GM12878 (cell line): ENCODE measurements at regions of chr3 and their contacts with region 1.

Region 1: DNA sequence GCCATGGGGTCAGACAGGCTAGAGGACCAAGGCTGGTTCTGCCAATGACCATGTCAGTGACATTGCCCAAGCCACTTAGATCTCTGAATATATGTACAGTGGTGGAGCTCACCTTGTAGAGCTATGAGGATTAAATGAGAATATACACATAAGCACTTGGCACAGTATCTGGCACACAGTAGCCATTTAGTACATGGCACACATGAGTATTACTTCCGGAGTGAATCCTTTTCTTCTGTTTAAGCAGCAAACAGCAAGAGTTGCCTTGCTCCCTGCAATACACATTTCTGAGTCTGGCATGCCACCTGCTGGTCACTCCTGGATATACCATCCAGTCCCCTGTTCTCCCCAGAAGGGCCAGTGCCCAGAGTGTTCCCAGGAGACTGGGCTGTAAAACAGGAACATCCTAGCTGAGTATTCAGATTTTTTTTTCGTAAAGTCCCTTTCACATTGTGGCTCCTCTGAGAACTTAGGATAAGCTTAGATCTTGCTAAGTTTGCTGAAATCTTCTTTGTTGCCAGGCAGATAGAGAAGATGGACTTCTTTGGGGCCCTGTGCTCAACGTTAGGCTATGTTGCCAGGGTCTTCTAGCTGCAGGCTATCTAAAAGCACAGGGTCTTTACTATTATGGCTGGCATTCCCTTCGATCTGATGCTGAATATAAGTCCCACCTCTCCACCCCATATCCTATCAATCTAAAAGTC is 203.4 kb downstream of the ADAMTS9 start:
- DNase-seq: peak; percentile 45
- ATAC-seq: peak; percentile 99
- H3K4me3 ChIP-seq: no peak overlapping the region
- H3K27ac ChIP-seq: no peak overlapping the region
- H3K4me1 ChIP-seq: no peaks in the 10 kb centered on the region
- H3K27me3 ChIP-seq: peaks cover under 1 to 5% of the 10 kb centered on the region in 2 experiments; a peak in 1 of 4 replicates
- CTCF ChIP-seq: peak; percentile 76 to 94 (median 88); a peak in 5 of 6 replicates
- EP300 ChIP-seq: no peak
- POLR2A ChIP-seq: no peak
- RAD21 ChIP-seq: peak; percentile 98

Region 2: DNA sequence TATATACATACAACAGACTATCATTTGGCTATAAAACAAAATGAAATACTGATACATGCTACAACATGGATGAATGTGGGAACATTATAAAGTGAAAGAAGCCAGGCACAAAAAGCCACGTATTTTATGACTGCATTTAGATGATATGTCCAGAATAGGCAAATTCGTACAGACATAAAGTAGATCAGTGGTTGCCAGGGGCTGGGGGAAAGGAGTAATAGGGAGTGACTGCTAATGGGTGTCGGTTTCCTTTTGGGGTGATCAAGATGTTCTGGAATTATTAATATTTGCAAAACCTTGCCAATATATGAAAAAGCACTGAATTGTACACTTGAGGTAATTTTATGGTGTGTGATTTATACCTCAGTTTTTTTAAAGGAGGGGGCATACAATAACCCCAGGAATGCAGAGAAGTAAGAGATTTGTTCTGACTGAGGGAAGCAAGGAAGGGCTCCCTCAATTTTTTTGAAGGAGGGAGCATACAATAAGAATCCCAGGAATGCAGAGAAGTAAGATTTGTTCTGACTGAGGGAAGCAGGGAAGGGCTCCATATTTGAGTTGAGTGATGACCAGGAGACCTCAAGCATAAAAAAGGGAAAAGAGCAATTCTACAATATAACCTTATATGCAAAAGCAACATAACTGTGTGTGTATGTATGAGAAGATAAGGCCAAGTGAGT is 467.4 kb before region 1 on chr3:
- CTCF ChIA-PET with region 1: interaction called, 11 read pairs
- POLR2A ChIA-PET with region 1: no interaction called
- RAD21 ChIA-PET with region 1: interaction called, 4 read pairs
- SMC1A ChIA-PET with region 1: interaction called, 5 read pairs
- in situ Hi-C with region 1: no loop called
- intact Hi-C with region 1: no loop called
- DNase-seq: no peak
- ATAC-seq: no peak
- H3K4me3 ChIP-seq: no peak overlapping the region
- H3K27ac ChIP-seq: no peak overlapping the region
- H3K4me1 ChIP-seq: no peaks in the 10 kb centered on the region
- H3K27me3 ChIP-seq: no peaks in the 10 kb centered on the region
- CTCF ChIP-seq: no peak
- EP300 ChIP-seq: no peak
- POLR2A ChIP-seq: no peak
- RAD21 ChIP-seq: no peak

Region 3: GRCh38 chr3:64030741-64031140 is 453.7 kb before region 1 on chr3:
- CTCF ChIA-PET with region 1: interaction called, 99 read pairs
- POLR2A ChIA-PET with region 1: interaction called, 3 read pairs
- RAD21 ChIA-PET with region 1: interaction called, 47 read pairs
- SMC1A ChIA-PET with region 1: interaction called, 98 read pairs
- in situ Hi-C with region 1: loop called (anchors 5 kb)
- intact Hi-C with region 1: loop called (anchors 1 kb)
- DNase-seq: peak; percentile 41
- ATAC-seq: peak; percentile 99
- H3K4me3 ChIP-seq: no peak overlapping the region; the same call in 1 of the 2 replicates
- H3K27ac ChIP-seq: no peak overlapping the region
- H3K4me1 ChIP-seq: no peaks in the 10 kb centered on the region; the same call in 1 of the 2 replicates
- H3K27me3 ChIP-seq: no peaks in the 10 kb centered on the region
- CTCF ChIP-seq: peak; percentile 79 to 97 (median 89); a peak in 5 of 6 replicates
- EP300 ChIP-seq: no peak
- POLR2A ChIP-seq: no peak
- RAD21 ChIP-seq: peak; percentile 97

Region 4: DNA sequence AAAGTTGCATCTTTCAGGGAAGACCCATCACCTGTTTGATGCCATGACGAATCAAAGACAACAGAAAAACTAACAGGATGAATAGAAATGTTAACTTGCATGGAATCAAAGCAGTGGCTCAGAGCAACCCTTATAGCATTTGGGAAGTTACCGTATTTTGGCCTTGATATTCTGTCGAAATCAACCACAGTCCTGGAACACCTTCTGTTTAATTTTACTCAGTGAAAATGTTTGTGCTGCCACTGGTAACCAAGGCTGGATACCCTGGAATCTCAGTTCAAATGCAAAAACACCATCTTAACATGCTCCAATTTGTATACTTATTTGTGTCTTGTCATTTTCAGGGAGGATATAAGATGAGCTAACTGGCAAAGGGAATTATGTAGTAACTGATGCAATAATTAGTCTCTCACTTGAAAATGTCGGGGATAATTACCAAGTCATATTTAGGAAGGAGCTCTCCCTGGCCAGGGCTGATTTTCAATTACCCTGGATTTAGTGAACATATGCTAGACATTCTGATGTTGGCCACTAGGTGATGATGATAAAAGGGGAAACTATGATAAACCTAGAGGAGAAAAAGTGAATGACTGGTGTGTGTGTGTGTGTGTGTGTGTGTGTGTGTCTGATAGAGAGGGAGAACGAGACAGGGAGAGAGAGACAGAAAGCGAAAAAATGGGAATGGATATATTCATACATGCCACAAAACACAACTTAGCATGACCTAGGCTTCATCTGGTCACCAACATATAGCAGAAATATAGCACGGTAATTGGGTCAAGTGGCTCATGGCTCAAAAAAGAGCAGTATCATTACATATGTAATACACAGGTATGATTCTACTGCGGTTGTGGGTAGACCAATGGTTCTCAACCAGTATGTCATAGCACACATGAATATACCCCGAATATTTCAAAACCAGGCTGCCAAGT is 240.2 kb before region 1 on chr3:
- CTCF ChIA-PET with region 1: interaction called, 7 read pairs
- POLR2A ChIA-PET with region 1: no interaction called
- RAD21 ChIA-PET with region 1: interaction called, 3 read pairs
- SMC1A ChIA-PET with region 1: interaction called, 5 read pairs
- in situ Hi-C with region 1: no loop called
- intact Hi-C with region 1: loop called (anchors 5 kb)
- DNase-seq: no peak
- ATAC-seq: peak; percentile 77
- H3K4me3 ChIP-seq: no peak overlapping the region
- H3K27ac ChIP-seq: no peak overlapping the region
- H3K4me1 ChIP-seq: no peaks in the 10 kb centered on the region
- H3K27me3 ChIP-seq: no peaks in the 10 kb centered on the region
- CTCF ChIP-seq: peak; percentile 24 to 51 (median 35); a peak in 3 of 6 replicates
- EP300 ChIP-seq: no peak
- POLR2A ChIP-seq: no peak
- RAD21 ChIP-seq: peak; percentile 44; the same call in 1 of the 2 replicates

Region 5: GRCh38 chr3:64405211-64405835 is 79.1 kb before region 1 on chr3:
- CTCF ChIA-PET with region 1: interaction called, 14 read pairs
- POLR2A ChIA-PET with region 1: interaction called, 4 read pairs
- RAD21 ChIA-PET with region 1: interaction called, 11 read pairs
- SMC1A ChIA-PET with region 1: interaction called, 25 read pairs
- in situ Hi-C with region 1: no loop called
- intact Hi-C with region 1: no loop called
- DNase-seq: no peak
- ATAC-seq: no peak
- H3K4me3 ChIP-seq: no peak overlapping the region
- H3K27ac ChIP-seq: no peak overlapping the region
- H3K4me1 ChIP-seq: no peaks in the 10 kb centered on the region
- H3K27me3 ChIP-seq: no peaks in the 10 kb centered on the region
- CTCF ChIP-seq: no peak
- EP300 ChIP-seq: no peak
- POLR2A ChIP-seq: no peak
- RAD21 ChIP-seq: no peak

Region 6: DNA sequence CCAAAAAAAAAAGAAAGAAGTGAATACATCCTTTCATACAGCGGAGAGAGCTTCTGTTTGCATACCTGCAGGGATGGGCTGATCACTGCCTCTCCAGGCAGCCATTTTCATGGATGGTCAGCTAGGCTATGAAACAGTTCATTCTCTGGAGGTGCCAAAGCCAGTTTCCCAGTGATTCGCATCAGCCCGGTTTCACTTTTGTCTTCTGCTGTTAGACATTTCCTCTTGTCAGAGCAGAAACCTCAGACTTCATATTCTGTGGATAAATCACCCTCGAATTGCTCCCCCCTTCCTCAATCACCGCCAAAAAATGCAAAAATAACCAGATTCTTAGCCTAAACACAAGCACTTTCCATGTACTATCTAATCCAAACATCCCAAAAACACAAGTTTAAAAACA is 22.2 kb before region 1 on chr3:
- CTCF ChIA-PET with region 1: interaction called, 49 read pairs
- POLR2A ChIA-PET with region 1: no interaction called
- RAD21 ChIA-PET with region 1: interaction called, 14 read pairs
- SMC1A ChIA-PET with region 1: interaction called, 39 read pairs
- in situ Hi-C with region 1: no loop called
- intact Hi-C with region 1: no loop called
- DNase-seq: no peak
- ATAC-seq: no peak
- H3K4me3 ChIP-seq: no peak overlapping the region
- H3K27ac ChIP-seq: no peak overlapping the region
- H3K4me1 ChIP-seq: no peaks in the 10 kb centered on the region
- H3K27me3 ChIP-seq: no peaks in the 10 kb centered on the region
- CTCF ChIP-seq: no peak
- EP300 ChIP-seq: no peak
- POLR2A ChIP-seq: no peak
- RAD21 ChIP-seq: no peak